ENCODE measurements at regions of chr10 and their contacts with region 1.

Region 1: DNA sequence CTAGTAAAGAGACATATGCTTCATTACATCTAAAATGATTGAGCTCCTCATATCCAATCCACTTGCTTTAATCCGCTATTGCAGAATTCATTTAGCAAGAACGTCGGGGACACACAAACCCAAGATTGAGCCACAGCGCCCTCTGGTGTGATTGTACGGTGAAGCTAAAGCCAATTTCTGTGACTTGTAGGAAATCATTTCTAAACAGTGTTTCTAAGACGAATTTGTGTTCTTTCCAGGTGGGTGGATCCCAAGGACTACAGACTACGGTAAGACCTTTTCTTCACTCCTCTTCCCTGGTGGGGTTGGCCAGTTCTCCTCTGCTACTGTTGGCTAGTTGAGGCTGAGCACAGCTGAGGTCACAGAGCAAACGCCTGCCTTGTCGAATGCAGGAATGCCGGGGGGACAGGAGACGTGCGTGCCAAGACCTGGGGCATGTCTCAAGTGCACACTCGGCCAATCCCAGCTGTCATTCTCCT is 5.2 kb downstream of the DMBT1 start:
- DNase-seq: peak; percentile 56 to 96 (median 88)

Region 2: DNA sequence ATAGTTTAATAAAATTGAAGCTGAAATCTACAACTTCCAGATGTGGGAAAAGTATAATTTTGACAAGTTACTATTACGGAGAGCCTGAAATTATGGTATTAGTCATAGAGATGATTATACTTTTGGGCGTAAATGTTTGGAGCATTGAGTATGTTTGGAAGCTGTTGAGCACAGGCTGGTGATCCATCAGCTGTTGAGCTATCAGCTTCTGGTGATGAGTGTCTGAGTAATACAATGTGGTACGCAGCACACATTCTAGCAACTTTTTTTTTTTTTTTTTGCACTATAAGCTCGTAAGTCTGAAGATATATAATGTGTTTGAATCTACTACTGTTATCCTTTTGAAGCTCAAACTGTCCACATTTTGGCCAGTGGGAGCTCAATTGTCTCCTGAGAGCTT is 761.3 kb before region 1 on chr10:
- intact Hi-C with region 1: no loop called
- DNase-seq: peak in 1 of 42 donors; percentile 17

Region 3: GRCh38 chr10:122435212-122435827 is 130.4 kb before region 1 on chr10:
- intact Hi-C with region 1: loop called (anchors 5 kb)
- DNase-seq: no peak

Region 4: GRCh38 chr10:122515588-122516231 is 50.1 kb before region 1 on chr10:
- intact Hi-C with region 1: loop called (anchors 10 kb)
- DNase-seq: peak in 1 of 42 donors; percentile 25

Measured in head of caudate nucleus (tissue), 42 donors.